Sigmoid colon (tissue), 7 donors: ENCODE measurements at regions of chr21 and their contacts with region 1.

Region 1: DNA sequence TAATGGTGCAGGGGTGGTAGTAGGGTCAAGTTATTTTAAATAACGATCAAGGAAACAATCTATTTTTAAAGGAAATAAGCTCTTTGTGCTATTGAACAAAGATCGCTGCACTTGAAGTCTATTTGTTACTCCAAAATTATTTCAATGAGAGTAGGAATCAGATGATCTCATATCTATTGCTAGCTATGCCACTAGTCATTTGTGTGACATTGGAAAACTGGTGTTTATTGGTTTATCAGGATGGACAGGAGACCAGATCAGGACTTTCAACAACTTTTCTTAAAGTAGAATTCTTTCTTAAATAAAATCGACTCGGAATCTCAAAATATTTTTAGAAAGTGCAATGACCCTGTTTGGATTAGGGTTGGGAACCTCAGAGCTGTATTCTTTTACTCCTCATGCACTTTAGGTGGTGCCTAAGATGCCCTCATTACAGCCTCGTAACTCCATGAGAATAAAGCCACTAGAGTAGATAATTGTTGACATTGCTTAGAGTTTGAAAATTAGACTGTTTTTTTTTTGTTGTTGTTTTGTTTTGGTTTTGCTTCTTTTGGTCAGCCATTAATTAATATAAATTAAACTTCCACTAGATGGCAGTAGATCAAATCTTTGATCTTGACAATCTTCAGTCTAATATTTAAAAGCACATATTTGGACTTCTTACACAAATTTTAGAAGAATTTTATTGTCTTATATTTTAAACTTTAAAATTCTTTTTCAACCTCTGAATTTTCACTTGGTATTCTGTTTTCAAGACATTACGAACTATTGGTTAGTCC is 352.4 kb downstream of the USP25 start:
- DNase-seq: no peak
- H3K4me3 ChIP-seq: no peak overlapping the region
- H3K27ac ChIP-seq: no peak overlapping the region
- H3K4me1 ChIP-seq: peaks cover 0 to 4% (median 2%) of the 10 kb centered on the region in 4 donors
- H3K27me3 ChIP-seq: no peaks in the 10 kb centered on the region
- CTCF ChIP-seq: peak in 2 of 4 experiments; percentile 8 to 44
- EP300 ChIP-seq: no peak
- POLR2A ChIP-seq: no peak

Region 2: GRCh38 chr21:16330082-16330907 is 248.1 kb after region 1 on chr21:
- intact Hi-C with region 1: loop called (anchors 5 kb)
- DNase-seq: no peak
- H3K4me3 ChIP-seq: no peak overlapping the region
- H3K27ac ChIP-seq: peak overlapping the region in 1 of 4 donors; percentile 36
- H3K4me1 ChIP-seq: no peaks in the 10 kb centered on the region
- H3K27me3 ChIP-seq: no peaks in the 10 kb centered on the region
- CTCF ChIP-seq: peak; percentile 15 to 76 (median 55)
- EP300 ChIP-seq: no peak
- POLR2A ChIP-seq: no peak